ENCODE measurements at regions of chr1 and their contacts with region 1.

Region 1: DNA sequence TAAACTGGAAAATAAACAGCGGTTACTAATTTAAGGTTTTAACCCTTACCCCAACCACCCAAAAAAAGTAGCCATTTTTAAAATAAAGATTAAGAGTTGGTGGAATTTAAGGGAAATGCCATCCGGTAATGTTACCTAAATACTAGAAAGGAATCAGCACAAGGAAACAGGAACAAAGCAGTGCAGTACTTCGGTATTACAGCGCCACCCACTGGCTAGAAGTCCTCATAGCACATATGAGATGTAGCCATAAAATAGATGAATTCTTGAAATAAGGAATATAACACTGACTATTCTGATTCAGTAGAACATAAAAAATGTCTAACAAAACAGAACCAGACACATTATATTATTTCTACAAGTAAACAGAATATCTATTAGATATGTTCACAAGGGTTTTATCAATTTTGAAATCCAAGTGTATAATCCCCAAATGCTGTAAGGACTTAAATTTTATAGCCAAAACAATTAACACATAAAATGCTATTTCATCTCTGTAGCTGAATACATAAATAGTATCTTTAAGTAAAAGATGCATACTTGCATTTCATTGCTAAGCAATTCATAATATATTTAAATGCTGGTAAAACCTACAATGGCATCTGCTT is 58.8 kb downstream of the FRRS1 start:
- DNase-seq: peak in 8 of 10 donors; percentile 41 to 92 (median 73)

Region 2: DNA sequence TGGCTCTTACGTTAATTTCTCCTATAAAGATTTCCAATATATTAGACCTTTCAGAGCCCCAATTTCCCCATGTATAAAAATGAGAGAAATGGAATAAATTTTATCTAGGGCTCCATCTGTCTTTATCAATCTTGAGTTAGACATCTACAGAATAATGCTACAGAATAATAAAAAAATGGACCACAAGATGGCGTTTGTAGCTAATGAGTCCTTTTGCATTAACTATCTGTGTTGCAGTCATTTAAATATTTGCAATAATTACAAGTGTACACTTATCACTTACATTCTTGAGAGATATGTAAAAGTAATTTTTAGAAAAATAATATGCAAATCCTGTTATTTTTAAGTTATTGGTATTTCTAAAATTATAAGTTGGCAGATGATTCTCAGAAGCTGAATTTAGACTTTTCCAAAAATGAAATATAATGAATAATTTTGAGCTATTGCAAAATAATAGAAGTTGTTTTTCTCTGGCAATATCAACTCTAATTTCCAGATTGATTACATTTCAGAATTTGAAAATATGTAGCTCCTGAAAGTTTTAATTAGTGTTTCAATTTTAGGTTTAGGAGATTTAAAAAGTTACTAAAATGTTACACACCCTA is 958.4 kb before region 1 on chr1:
- intact Hi-C with region 1: loop called (anchors 5 kb)
- DNase-seq: no peak

Region 3: GRCh38 chr1:99180343-99180808 is 527.3 kb before region 1 on chr1:
- intact Hi-C with region 1: loop called (anchors 1 kb)
- DNase-seq: peak in 8 of 10 donors; percentile 18 to 93 (median 74)

Region 4: GRCh38 chr1:99516141-99516540 is 191.5 kb before region 1 on chr1:
- intact Hi-C with region 1: no loop called
- DNase-seq: no peak

Measured in posterior cingulate gyrus (tissue), 11 donors.